Gastrocnemius medialis (tissue), 4 donors: ENCODE measurements at regions of chr14 and their contacts with region 1.

Region 1: GRCh38 chr14:90518941-90519256 is 122.1 kb downstream of the CALM1 start:
- DNase-seq: no peak
- ATAC-seq: no peak
- H3K4me3 ChIP-seq: no peak overlapping the region
- H3K27ac ChIP-seq: peak overlapping the region in 1 of 4 donors; percentile 35
- H3K4me1 ChIP-seq: peaks cover 24 to 33% of the 10 kb centered on the region in 2 donors
- H3K27me3 ChIP-seq: no peaks in the 10 kb centered on the region
- CTCF ChIP-seq: peak in 3 of 5 experiments; percentile 35 to 45 (median 40)
- POLR2A ChIP-seq: no peak

Region 2: DNA sequence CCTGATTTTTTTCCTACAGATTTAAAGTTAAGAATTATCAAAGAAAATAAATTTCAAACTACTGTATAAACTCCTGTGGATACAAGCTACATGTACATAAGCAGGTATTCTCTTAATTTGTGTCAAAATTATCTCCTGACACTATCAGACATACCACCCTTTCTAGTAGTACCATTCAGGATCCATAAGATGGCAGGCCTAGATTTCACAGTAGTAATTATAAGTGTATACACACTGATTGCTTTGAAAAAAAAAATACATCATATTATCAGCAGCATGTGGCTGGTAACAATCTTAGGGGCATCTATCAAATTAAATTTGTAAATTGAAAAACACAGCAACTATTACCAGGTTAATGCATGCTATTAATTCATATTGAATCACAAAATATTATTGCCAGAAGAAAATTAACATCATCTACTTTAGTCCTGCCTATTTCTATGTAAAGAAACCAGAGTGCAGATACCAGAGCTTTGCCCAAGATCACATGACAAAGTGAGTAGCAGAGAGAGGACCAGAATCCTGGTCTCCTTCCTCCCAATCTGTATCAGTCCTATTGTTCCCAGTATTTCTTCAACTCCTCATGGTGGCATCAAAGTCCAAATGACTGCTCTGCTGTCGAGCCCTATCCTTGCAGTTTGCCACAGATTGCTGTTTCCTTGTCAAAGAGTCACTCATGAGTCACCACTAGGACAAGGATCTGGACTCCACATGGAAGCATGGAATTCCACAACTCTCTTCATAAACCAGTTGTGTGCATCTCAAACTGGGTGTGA is 149.8 kb before region 1 on chr14:
- in situ Hi-C with region 1: no loop called
- intact Hi-C with region 1: no loop called
- DNase-seq: no peak
- ATAC-seq: peak in 1 of 2 donors; percentile 51
- H3K4me3 ChIP-seq: no peak overlapping the region
- H3K27ac ChIP-seq: no peak overlapping the region
- H3K4me1 ChIP-seq: no peaks in the 10 kb centered on the region
- H3K27me3 ChIP-seq: no peaks in the 10 kb centered on the region
- CTCF ChIP-seq: peak in 1 of 5 experiments; percentile 41
- POLR2A ChIP-seq: no peak

Region 3: DNA sequence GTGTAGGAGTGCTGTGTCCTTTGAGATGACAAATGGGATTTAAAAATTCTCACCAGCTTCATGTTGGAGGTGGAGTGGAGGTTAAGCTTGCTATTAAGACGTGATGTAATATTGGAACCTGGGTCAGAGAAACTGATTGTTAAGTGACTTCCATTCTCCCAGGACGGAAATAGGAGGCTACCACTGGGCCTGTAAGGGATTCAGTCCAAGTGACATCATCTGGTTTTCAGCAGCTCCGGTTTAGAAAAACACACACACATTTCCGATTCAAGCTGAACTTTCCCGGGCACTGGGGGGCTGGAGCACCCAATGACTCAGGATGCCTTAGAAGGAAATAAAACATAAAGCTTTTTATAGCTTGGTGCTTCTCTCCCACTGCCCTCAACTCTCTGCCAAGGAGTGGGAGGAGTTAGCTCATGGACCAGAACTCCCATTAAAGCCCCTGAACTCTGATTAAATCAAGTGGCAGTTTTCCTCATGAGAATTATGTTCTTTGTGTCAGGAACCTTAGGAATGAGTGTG is 109.6 kb before region 1 on chr14:
- in situ Hi-C with region 1: no loop called
- intact Hi-C with region 1: loop called (anchors 5 kb)
- DNase-seq: no peak
- ATAC-seq: peak; percentile 47 to 60
- H3K4me3 ChIP-seq: no peak overlapping the region
- H3K27ac ChIP-seq: peak overlapping the region; percentile 63 to 94 (median 94)
- H3K4me1 ChIP-seq: peaks cover 21 to 23% of the 10 kb centered on the region in 2 donors
- H3K27me3 ChIP-seq: no peaks in the 10 kb centered on the region
- CTCF ChIP-seq: no peak
- POLR2A ChIP-seq: no peak